Cardiac septum (tissue), 1 donor: ENCODE measurements at regions of chr3 and their contacts with region 1.

Region 1: DNA sequence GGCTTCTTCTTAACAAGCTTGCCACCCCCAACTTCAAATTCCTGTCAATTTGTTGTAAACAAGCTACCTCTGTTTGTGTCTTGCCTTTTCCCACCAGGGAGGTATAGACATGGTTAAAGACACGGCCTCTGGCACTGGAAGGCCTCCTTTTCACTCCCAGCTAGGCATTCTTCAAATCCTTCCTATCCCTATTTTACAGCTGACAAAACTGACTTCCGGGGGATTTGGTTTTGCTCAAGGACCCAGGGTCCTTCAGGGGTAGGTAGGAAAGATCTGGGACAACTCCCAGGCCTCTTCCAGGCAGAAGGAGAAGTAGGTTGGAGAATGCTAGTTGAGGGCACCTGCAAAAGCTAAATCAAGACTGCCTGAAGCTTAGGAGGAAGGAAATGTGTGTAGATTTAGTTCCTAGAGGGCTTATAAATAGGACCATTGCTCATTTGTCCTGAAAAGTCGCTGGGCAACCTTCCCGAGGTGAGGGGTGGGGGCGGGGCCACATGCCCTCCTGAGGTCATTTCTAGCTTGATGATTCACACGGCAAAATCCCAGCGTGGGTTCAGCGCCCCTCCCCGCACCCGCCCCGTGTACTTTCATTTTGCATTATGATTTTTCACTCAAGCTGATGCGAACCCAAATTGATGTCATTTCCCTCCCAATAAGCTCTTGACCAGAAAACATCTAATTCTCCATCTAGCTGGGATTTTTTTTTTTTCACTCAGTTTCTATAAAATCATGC is 365.5 kb downstream of the SHQ1 start:
- DNase-seq: peak; percentile 84

Region 2: DNA sequence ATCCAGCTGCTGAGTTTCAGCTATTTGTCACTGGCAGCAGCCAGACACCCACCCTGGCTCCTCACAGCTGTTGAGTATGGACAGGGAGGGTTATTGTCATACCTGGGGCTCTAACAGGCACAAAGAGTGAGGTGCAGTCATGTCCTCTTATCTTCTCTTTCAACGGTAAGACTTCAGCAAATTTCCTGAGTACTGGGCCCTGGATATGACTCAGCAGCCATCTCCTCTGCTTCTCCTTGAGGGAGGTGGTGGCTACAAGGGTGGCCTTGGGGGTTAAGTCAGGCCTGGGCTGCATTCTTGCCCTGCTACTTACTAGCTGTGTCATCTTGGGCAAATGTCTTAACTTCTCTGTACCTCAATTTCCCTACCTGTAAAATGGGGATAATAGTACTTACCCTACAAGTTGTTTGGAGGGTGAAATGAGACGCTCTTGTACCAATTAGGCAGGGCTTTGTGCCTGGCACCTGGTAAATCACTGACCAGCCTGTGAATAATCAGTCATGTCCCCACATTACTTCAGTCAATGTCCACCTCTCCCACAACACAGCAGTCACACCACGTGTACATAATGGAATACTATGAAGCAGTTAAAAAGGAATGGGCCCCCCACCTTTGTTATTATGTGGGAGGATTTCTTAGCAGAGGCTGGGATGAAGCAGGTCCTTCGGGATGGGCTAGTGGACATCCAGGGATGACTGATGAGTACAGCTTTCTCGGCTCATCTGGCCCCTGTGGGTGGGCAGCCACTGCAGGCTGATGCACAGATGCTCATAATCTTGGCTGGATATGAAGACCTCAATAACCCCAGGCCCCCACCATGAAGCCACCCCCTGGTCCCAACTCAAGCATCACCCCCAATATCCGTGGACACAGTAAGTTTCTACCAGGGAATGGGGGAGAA is 163.3 kb before region 1 on chr3:
- intact Hi-C with region 1: loop called (anchors 5 kb)
- DNase-seq: no peak

Region 3: GRCh38 chr3:72447059-72447946 is 35.5 kb before region 1 on chr3:
- intact Hi-C with region 1: loop called (anchors 2 kb)
- DNase-seq: peak; percentile 96

Region 4: GRCh38 chr3:72665701-72666443 is 183.1 kb after region 1 on chr3:
- intact Hi-C with region 1: loop called (anchors 2 kb)
- DNase-seq: no peak